PC-3 (cell line): ENCODE measurements at regions of chr6 and their contacts with region 1.

Region 1: GRCh38 chr6:133191323-133191722 is 49.8 kb upstream of the EYA4 start:
- DNase-seq: no peak
- ATAC-seq: no peak
- H3K4me3 ChIP-seq: no peak overlapping the region
- H3K27ac ChIP-seq: no peak overlapping the region
- H3K4me1 ChIP-seq: peaks cover 4% of the 10 kb centered on the region
- H3K27me3 ChIP-seq: no peaks in the 10 kb centered on the region
- CTCF ChIP-seq: no peak

Region 2: DNA sequence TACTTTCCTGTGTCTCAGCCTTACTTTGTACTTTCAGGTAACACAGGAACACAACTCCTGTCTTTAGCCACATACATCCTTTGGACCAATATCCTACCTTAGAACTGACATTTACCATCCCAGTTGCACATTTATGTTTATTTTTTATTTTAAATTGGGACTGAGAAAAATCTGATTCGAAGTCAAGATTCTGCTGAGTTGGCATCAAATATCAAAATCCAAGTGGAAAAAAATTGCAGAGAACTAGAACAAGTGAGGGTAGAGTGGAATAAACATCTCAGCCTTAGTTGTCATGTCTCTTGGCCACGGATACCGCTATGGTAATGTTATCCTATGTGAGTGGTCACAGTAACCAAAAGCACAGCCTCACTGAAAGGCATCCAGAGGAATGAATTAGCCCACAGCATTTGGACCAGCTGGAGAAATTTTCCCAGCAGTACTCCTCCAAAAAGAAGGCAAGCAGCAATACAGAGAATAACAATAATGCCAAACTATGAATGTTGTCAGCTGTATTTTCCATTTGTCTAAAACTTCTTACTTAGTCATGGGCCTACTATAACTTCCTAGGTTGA is 32.2 kb after region 1 on chr6:
- CTCF ChIA-PET with region 1: no interaction called
- POLR2A ChIA-PET with region 1: no interaction called
- intact Hi-C with region 1: no loop called
- DNase-seq: no peak
- ATAC-seq: no peak
- H3K4me3 ChIP-seq: no peak overlapping the region
- H3K27ac ChIP-seq: no peak overlapping the region
- H3K4me1 ChIP-seq: no peaks in the 10 kb centered on the region
- H3K27me3 ChIP-seq: no peaks in the 10 kb centered on the region
- CTCF ChIP-seq: no peak

Region 3: DNA sequence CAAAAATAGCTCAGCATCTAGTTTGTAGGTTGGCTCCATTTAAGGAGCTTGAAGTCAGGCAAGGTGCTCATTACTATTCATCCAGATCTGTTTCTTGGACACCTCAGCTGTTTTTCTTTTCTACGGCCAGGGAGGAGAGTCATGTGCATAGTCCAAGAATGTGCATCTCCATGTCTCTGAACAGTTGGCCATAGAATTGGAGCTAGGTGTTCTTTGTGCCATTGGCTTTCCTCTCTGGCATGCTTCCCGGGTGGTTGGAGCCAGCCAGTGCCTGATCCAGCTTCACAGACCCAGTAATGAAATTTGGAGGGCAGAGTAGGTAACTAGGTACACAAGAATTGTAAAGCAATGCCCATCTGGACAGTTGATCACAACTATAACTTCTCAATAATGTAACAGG is 71.5 kb after region 1 on chr6:
- CTCF ChIA-PET with region 1: interaction called, 11 read pairs
- POLR2A ChIA-PET with region 1: no interaction called
- intact Hi-C with region 1: no loop called
- DNase-seq: no peak
- ATAC-seq: no peak
- H3K4me3 ChIP-seq: no peak overlapping the region
- H3K27ac ChIP-seq: no peak overlapping the region
- H3K4me1 ChIP-seq: peaks cover 9% of the 10 kb centered on the region; the same call in 1 of the 2 replicates
- H3K27me3 ChIP-seq: no peaks in the 10 kb centered on the region
- CTCF ChIP-seq: no peak

Region 4: DNA sequence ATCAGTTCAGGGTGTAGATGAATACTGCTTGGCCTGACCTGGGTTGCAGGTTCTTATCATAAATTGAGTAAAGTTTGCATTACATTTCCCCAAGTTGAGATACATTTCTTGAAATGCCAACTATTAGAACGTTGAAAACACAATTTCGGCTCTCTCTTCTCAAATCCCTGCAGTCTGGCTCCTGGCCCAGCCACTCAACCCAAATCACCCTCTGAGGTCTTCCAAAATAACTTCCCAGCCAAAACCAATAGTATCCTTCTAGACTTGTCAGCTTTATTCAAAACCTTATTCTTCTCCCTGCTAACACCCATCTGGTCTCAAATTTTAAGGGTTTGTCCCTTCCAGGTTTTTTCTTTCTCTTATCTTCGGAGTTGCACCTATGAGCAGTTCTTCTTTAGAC is 313.4 kb after region 1 on chr6:
- CTCF ChIA-PET with region 1: no interaction called
- POLR2A ChIA-PET with region 1: no interaction called
- intact Hi-C with region 1: loop called (anchors 2 kb)
- DNase-seq: no peak
- ATAC-seq: no peak
- H3K4me3 ChIP-seq: no peak overlapping the region
- H3K27ac ChIP-seq: no peak overlapping the region
- H3K4me1 ChIP-seq: 0 out of 2 replicates have a peak, but pooled peaks cover 3% of the 10 kb centered on the region
- H3K27me3 ChIP-seq: no peaks in the 10 kb centered on the region
- CTCF ChIP-seq: no peak